Activated CD4-positive, alpha-beta T cell treated with anti-CD3 and anti-CD28 coated beads, Interleukin-2, amount 10 ng/mL, durations not matched to agents 24 days and 14 days (primary cell): ENCODE measurements at regions of chr3 and their contacts with region 1.

Region 1: GRCh38 chr3:28940530-28940929 is 340.3 kb upstream of the RBMS3 start:
- DNase-seq: peak; percentile 64
- H3K4me3 Mint-ChIP-seq: peak overlapping the region; percentile 72
- H3K27ac Mint-ChIP-seq: peak overlapping the region; percentile 77
- H3K4me1 Mint-ChIP-seq: peaks cover 32% of the 10 kb centered on the region
- H3K27me3 Mint-ChIP-seq: no peaks in the 10 kb centered on the region

Region 2: GRCh38 chr3:28808068-28808467 is 132.5 kb before region 1 on chr3:
- intact Hi-C with region 1: no loop called
- DNase-seq: no peak
- H3K4me3 Mint-ChIP-seq: no peak overlapping the region
- H3K27ac Mint-ChIP-seq: no peak overlapping the region
- H3K4me1 Mint-ChIP-seq: no peaks in the 10 kb centered on the region
- H3K27me3 Mint-ChIP-seq: no peaks in the 10 kb centered on the region

Region 3: DNA sequence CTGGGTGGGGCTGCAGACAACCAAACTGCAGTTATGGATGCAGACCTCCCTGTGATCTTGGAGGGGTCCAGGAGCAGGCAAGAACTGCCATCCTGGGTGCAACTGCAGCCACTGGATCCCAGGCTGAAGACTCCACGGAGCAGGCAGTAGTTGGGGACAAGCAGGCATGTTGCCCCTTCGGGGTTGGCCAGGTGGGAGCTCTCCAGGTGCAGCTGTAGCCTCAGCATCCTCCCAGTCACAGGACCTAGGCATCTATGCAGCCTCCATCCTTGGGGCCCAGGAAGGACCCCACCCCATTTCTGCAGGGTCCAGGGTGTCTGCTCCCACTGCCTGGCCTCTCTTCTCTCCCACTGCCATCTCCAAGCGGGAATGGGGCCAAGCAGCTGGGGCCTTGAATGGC is 18.1 kb after region 1 on chr3:
- intact Hi-C with region 1: loop called (anchors 1 kb)
- DNase-seq: no peak
- H3K4me3 Mint-ChIP-seq: no peak overlapping the region
- H3K27ac Mint-ChIP-seq: no peak overlapping the region
- H3K4me1 Mint-ChIP-seq: no peaks in the 10 kb centered on the region
- H3K27me3 Mint-ChIP-seq: peaks cover 1% of the 10 kb centered on the region

Region 4: GRCh38 chr3:28989646-28990089 is 49.1 kb after region 1 on chr3:
- intact Hi-C with region 1: no loop called
- DNase-seq: no peak
- H3K4me3 Mint-ChIP-seq: no peak overlapping the region
- H3K27ac Mint-ChIP-seq: no peak overlapping the region
- H3K4me1 Mint-ChIP-seq: peaks cover 7% of the 10 kb centered on the region
- H3K27me3 Mint-ChIP-seq: no peaks in the 10 kb centered on the region

Region 5: GRCh38 chr3:29026286-29026685 is 85.8 kb after region 1 on chr3:
- intact Hi-C with region 1: loop called (anchors 1 kb)
- DNase-seq: no peak
- H3K4me3 Mint-ChIP-seq: no peak overlapping the region
- H3K27ac Mint-ChIP-seq: peak overlapping the region; percentile 71
- H3K4me1 Mint-ChIP-seq: peaks cover 5% of the 10 kb centered on the region
- H3K27me3 Mint-ChIP-seq: no peaks in the 10 kb centered on the region